Natural killer cell (primary cell): ENCODE measurements at regions of chr20 and their contacts with region 1.

Region 1: GRCh38 chr20:6920991-6921613 is 153.6 kb downstream of the BMP2 start:
- DNase-seq: no peak
- ATAC-seq: no peak
- H3K4me3 ChIP-seq: no peak overlapping the region
- H3K4me3 Mint-ChIP-seq: no peak overlapping the region
- H3K27ac ChIP-seq: no peak overlapping the region
- H3K27ac Mint-ChIP-seq: no peak overlapping the region
- H3K4me1 ChIP-seq: no peaks in the 10 kb centered on the region
- H3K4me1 Mint-ChIP-seq: no peaks in the 10 kb centered on the region
- H3K27me3 ChIP-seq: no peaks in the 10 kb centered on the region
- H3K27me3 Mint-ChIP-seq: no peaks in the 10 kb centered on the region
- CTCF ChIP-seq: no peak

Region 2: DNA sequence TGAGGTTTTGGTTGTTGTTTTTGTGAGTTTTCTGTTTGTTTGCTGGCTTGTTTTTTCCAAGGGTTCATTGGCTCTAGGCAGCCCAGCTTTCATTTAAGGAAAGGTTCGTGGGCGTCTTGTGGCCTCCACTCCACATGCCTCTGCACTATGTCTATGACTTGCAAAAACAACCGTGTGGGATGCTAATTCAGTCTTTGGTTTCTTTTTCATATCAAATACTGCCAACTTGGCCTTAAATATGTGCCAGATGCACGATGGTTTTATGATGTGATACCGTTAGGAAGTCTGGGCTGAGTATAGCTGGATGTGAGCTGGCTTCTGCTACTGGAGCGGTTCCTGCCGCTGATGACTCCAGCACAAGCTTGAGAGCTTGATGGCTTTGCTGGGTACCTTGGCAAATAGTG is 57.3 kb before region 1 on chr20:
- intact Hi-C with region 1: loop called (anchors 10 kb)
- DNase-seq: no peak
- ATAC-seq: no peak
- H3K4me3 ChIP-seq: no peak overlapping the region
- H3K4me3 Mint-ChIP-seq: no peak overlapping the region
- H3K27ac ChIP-seq: no peak overlapping the region
- H3K27ac Mint-ChIP-seq: no peak overlapping the region
- H3K4me1 ChIP-seq: no peaks in the 10 kb centered on the region
- H3K4me1 Mint-ChIP-seq: peaks cover 0 to 3% of the 10 kb centered on the region in 2 donors
- H3K27me3 ChIP-seq: no peaks in the 10 kb centered on the region
- H3K27me3 Mint-ChIP-seq: no peaks in the 10 kb centered on the region
- CTCF ChIP-seq: no peak

Region 3: DNA sequence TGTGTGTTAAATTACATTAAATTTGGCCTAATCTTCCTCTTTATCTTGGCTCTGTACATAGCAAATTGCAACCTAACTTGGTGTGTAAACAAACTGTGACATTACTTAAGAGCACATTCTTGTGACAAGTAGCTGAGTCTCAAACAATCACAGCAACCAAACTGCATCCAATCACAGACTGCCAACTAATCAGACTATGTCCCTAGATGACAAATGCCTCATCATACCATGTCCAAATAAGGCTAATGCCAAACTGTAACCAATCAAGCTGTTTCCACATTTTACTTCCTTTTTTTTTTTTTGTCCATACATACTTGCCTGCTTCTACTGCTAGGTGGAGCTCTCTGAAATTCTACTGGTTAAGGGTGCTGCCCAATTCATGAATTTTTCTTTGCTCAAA is 55.4 kb after region 1 on chr20:
- intact Hi-C with region 1: no loop called
- DNase-seq: no peak
- ATAC-seq: no peak
- H3K4me3 ChIP-seq: no peak overlapping the region
- H3K4me3 Mint-ChIP-seq: no peak overlapping the region
- H3K27ac ChIP-seq: no peak overlapping the region
- H3K27ac Mint-ChIP-seq: no peak overlapping the region
- H3K4me1 ChIP-seq: no peaks in the 10 kb centered on the region
- H3K4me1 Mint-ChIP-seq: no peaks in the 10 kb centered on the region
- H3K27me3 ChIP-seq: no peaks in the 10 kb centered on the region
- H3K27me3 Mint-ChIP-seq: no peaks in the 10 kb centered on the region
- CTCF ChIP-seq: no peak

Region 4: GRCh38 chr20:7010584-7010983 is 89.5 kb after region 1 on chr20:
- intact Hi-C with region 1: no loop called
- DNase-seq: no peak
- ATAC-seq: no peak
- H3K4me3 ChIP-seq: no peak overlapping the region
- H3K4me3 Mint-ChIP-seq: no peak overlapping the region
- H3K27ac ChIP-seq: no peak overlapping the region
- H3K27ac Mint-ChIP-seq: no peak overlapping the region
- H3K4me1 ChIP-seq: no peaks in the 10 kb centered on the region
- H3K4me1 Mint-ChIP-seq: no peaks in the 10 kb centered on the region
- H3K27me3 ChIP-seq: no peaks in the 10 kb centered on the region
- H3K27me3 Mint-ChIP-seq: no peaks in the 10 kb centered on the region
- CTCF ChIP-seq: no peak